GM23248 (cell line): ENCODE measurements at regions of chrX and their contacts with region 1.

Region 1: DNA sequence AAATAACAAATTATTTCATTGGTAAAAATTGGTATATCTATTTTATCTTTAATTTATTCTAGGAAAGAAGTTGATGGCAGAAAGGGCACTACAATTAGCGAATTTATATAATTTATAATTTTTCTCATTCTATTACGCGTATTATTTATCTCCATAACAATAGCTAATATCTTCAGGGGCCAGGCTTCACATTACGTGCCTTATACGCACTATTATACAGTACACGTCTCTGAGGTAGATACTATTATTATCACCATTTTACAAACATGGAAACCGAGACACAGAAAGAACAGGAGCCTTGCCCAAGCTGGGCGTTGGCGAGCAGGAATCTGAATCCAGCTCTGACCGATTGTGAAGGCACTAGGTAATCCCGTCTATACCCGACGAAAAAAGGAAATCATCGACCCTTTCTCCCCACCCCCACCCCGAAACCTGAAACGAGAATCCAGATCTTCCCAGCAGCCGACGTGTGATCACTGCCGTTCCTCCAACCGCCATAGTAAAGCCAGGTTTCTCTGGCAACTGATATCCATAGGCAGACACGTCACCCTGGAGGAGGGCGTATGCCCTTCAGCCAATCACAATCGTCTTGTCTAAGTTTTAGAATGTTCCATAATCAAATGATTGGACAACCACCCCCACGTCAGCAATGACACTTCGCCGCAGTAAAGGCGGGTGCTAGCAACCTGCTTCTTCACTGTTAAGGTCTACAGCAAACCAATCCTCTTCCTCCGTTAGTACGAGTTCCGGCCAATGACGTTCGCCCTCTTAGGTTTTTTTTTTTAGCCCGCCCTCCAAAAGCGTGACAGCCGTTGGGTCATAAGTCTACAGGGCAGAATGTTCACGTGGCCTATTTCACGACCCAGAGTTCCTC is at the start of gene MORF4L2:
- DNase-seq: peak; percentile 95
- H3K4me3 ChIP-seq: peak within 1 kb of the TSS; percentile 100
- H3K27ac ChIP-seq: peak within 1 kb of the TSS; percentile 100
- H3K4me1 ChIP-seq: peaks cover 35% of the 10 kb centered on the region
- H3K27me3 ChIP-seq: no peaks in the 10 kb centered on the region
- total RNA-seq, gene MORF4L2: 640 and 664 TPM in 2 replicates

Region 2: DNA sequence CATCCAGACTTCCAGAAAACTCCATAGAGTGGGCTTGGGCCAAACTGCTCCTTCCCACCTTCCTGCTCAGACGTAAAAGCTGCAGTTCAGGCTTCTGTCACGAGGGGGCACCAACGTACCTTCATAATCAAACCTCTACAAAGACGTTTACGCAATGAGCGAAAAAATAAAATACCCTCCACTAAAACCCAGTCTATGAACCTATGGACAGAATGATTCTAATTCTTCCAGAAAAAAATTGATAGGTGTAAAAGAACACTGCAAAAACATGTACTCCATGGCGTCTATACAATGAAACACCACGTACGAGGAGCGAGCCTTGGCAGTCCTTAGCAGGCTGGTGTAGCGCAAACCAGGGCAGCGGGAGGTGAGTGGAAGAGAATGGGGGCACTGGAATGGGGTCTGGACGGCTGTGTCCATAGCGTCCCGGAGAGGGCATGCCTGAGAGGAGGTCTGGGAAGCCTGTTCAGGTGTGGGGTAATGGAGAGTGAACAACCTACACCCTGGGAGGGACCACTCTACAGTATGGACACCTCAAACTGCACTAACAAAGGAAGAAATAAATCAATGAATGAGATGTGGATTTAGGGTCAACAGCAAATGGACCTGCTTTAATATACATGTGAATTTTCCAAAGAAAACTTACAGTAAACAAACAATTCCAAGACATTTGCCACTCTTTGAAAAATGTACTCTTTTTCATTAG is 152.8 kb before region 1 on chrX:
- in situ Hi-C with region 1: loop called (anchors 10 kb)
- DNase-seq: peak; percentile 51
- H3K4me3 ChIP-seq: peak overlapping the region; percentile 62
- H3K27ac ChIP-seq: no peak overlapping the region
- H3K4me1 ChIP-seq: peaks cover 18% of the 10 kb centered on the region
- H3K27me3 ChIP-seq: no peaks in the 10 kb centered on the region